CD4-positive, alpha-beta T cell (primary cell): ENCODE measurements at regions of chr1 and their contacts with region 1.

Region 1: GRCh38 chr1:51660570-51660969 is 43.7 kb downstream of the OSBPL9 start:
- DNase-seq: no peak
- ATAC-seq: no peak
- H3K4me3 ChIP-seq: no peak overlapping the region
- H3K4me3 Mint-ChIP-seq: no peak overlapping the region
- H3K27ac ChIP-seq: no peak overlapping the region
- H3K27ac Mint-ChIP-seq: no peak overlapping the region
- H3K4me1 ChIP-seq: no peaks in the 10 kb centered on the region
- H3K4me1 Mint-ChIP-seq: peaks cover 5% of the 10 kb centered on the region
- H3K27me3 ChIP-seq: no peaks in the 10 kb centered on the region
- H3K27me3 Mint-ChIP-seq: no peaks in the 10 kb centered on the region
- CTCF ChIP-seq: no peak

Region 2: DNA sequence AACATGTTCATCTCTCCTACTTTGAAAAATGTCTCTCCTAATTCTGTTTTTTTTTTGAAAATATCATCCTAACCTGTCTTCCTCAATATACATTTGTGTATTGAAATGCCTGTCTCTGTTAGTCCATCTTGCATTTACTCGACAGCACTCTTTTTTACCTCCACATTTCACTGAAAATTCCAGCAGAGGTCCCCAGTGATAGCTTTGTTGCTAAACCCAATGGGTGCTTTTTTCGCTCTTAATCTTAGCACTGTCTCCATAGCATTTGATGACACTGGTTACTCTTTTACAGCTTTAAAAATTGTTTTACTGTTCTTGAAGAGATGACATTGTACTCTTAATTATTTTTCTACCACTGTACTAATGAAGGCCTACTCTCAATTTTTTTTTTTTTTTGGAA is 32.9 kb before region 1 on chr1:
- CTCF ChIA-PET with region 1: no interaction called
- POLR2A ChIA-PET with region 1: interaction called, 10 read pairs
- intact Hi-C with region 1: no loop called
- DNase-seq: peak in 1 of 14 experiments; percentile 24
- ATAC-seq: peak; percentile 37
- H3K4me3 ChIP-seq: no peak overlapping the region
- H3K4me3 Mint-ChIP-seq: no peak overlapping the region
- H3K27ac ChIP-seq: no peak overlapping the region
- H3K27ac Mint-ChIP-seq: no peak overlapping the region
- H3K4me1 ChIP-seq: no peaks in the 10 kb centered on the region
- H3K4me1 Mint-ChIP-seq: peaks cover 43% of the 10 kb centered on the region
- H3K27me3 ChIP-seq: no peaks in the 10 kb centered on the region
- H3K27me3 Mint-ChIP-seq: no peaks in the 10 kb centered on the region
- CTCF ChIP-seq: no peak

Region 3: GRCh38 chr1:51729156-51729823 is 68.7 kb after region 1 on chr1:
- CTCF ChIA-PET with region 1: no interaction called
- POLR2A ChIA-PET with region 1: no interaction called
- intact Hi-C with region 1: no loop called
- DNase-seq: peak; percentile 84 to 97 (median 90)
- ATAC-seq: peak; percentile 90
- H3K4me3 ChIP-seq: peak overlapping the region; percentile 92
- H3K4me3 Mint-ChIP-seq: peak overlapping the region; percentile 95
- H3K27ac ChIP-seq: peak overlapping the region; percentile 71
- H3K27ac Mint-ChIP-seq: peak overlapping the region; percentile 87
- H3K4me1 ChIP-seq: peaks cover 22% of the 10 kb centered on the region
- H3K4me1 Mint-ChIP-seq: peaks cover 58% of the 10 kb centered on the region
- H3K27me3 ChIP-seq: no peaks in the 10 kb centered on the region
- H3K27me3 Mint-ChIP-seq: no peaks in the 10 kb centered on the region
- CTCF ChIP-seq: no peak

Region 4: DNA sequence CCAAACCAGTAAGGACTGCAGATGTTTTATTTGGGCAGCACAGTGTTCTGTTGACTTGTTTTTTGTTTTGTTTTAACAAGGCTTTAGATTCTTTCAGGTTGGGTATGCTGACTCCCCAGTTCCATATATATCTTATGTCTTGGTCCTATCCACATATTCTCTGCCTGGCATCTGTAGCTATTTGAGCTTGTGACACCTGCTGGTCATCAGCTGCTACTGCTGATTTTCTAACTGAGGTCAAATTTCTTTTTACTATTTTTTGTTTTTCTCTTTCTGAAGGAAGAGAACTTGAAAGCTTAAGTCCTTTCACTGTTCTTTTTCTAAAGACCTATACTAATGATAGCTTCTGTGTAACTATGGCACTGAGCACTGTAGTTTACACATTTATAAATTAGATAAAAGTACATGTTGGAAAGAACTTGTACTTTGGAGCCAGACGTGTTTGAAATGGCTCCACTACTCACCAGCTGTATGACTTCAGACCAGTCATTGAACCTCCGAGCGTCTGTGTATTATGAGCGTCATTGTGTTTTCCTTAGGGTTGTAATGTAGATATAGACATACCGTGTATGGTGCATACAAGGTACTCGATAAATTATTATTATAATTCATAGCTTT is 108.5 kb after region 1 on chr1:
- CTCF ChIA-PET with region 1: no interaction called
- POLR2A ChIA-PET with region 1: no interaction called
- intact Hi-C with region 1: no loop called
- DNase-seq: peak in 4 of 14 experiments; percentile 39 to 69 (median 58)
- ATAC-seq: peak; percentile 76
- H3K4me3 ChIP-seq: no peak overlapping the region
- H3K4me3 Mint-ChIP-seq: no peak overlapping the region
- H3K27ac ChIP-seq: no peak overlapping the region
- H3K27ac Mint-ChIP-seq: peak overlapping the region; percentile 12
- H3K4me1 ChIP-seq: no peaks in the 10 kb centered on the region
- H3K4me1 Mint-ChIP-seq: peaks cover 7% of the 10 kb centered on the region
- H3K27me3 ChIP-seq: no peaks in the 10 kb centered on the region
- H3K27me3 Mint-ChIP-seq: no peaks in the 10 kb centered on the region
- CTCF ChIP-seq: peak; percentile 75